Right cardiac atrium (tissue), 5 donors: ENCODE measurements at regions of chr19 and their contacts with region 1.

Region 1: DNA sequence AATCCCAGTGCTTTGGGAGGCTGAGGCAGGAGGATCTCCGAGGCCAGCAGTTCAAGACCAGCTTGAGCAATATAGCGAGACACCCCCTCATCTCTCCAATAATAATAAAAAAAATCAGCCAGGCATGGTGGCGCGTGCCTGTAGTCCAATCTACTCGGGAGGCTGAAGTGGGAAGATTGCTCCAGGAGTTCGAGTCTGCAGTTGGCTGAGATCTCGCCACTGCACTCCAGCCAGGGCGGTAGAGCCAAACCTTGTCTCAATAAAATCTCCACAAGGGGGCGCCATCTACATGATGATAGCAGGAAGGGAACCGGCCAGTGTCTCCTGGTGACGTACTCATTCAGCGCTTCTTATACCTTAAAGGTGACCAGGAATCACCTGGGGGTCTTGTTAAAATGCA is 13.6 kb upstream of the C5AR1 start:
- DNase-seq: peak; percentile 42 to 72 (median 68)
- ATAC-seq: peak; percentile 57 to 82
- H3K4me3 ChIP-seq: no peak overlapping the region
- H3K27ac ChIP-seq: no peak overlapping the region
- H3K4me1 ChIP-seq: no peaks in the 10 kb centered on the region
- H3K27me3 ChIP-seq: no peaks in the 10 kb centered on the region

Region 2: GRCh38 chr19:47379381-47379938 is 83.4 kb after region 1 on chr19:
- intact Hi-C with region 1: no loop called
- DNase-seq: no peak
- ATAC-seq: no peak
- H3K4me3 ChIP-seq: no peak overlapping the region
- H3K27ac ChIP-seq: no peak overlapping the region
- H3K4me1 ChIP-seq: no peaks in the 10 kb centered on the region
- H3K27me3 ChIP-seq: no peaks in the 10 kb centered on the region

Region 3: DNA sequence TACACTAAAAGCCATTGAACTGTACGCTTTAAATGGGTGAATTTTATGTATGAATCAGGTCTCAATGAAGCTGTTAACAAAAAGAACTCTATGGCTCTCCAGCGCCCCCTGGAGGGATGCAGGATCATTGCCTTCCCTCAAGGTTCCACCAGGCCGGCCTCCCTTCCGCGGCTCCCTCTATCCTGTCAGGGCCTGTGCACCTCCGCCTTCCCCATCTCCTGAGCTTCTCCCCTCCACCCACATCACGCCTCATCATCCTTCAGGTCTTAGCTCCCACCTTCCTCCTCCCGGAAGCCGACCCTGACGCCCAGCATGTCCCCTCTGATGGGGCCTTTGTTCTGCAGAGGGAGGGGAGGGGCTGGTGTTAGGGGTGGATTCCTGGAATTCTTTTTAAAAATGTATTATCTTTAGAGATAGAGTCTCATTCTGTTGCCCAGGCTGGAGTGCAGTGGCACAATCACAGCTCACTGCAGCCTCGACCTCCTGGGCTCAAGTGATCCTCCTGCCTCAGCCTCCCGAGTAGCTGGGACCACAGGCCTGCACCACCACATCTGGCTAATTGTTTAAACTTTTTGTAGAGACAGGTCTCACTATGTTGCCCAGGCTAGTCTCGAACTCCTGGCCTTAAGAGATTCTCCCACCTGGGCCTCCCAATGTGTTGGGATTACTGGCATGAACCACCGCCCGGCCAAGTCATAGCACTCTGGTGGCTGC is 95.6 kb after region 1 on chr19:
- intact Hi-C with region 1: loop called in 3 of 4 experiments (anchors 2 to 5 kb)
- DNase-seq: peak; percentile 69 to 87 (median 82)
- ATAC-seq: peak; percentile 43 to 77
- H3K4me3 ChIP-seq: no peak overlapping the region
- H3K27ac ChIP-seq: no peak overlapping the region
- H3K4me1 ChIP-seq: no peaks in the 10 kb centered on the region
- H3K27me3 ChIP-seq: no peaks in the 10 kb centered on the region

Region 4: GRCh38 chr19:47428177-47428894 is 132.3 kb after region 1 on chr19:
- intact Hi-C with region 1: loop called in 3 of 4 experiments (anchors 10 kb)
- DNase-seq: peak; percentile 91 to 94 (median 91)
- ATAC-seq: peak; percentile 91 to 94
- H3K4me3 ChIP-seq: no peak overlapping the region
- H3K27ac ChIP-seq: no peak overlapping the region
- H3K4me1 ChIP-seq: no peaks in the 10 kb centered on the region
- H3K27me3 ChIP-seq: no peaks in the 10 kb centered on the region

Region 5: DNA sequence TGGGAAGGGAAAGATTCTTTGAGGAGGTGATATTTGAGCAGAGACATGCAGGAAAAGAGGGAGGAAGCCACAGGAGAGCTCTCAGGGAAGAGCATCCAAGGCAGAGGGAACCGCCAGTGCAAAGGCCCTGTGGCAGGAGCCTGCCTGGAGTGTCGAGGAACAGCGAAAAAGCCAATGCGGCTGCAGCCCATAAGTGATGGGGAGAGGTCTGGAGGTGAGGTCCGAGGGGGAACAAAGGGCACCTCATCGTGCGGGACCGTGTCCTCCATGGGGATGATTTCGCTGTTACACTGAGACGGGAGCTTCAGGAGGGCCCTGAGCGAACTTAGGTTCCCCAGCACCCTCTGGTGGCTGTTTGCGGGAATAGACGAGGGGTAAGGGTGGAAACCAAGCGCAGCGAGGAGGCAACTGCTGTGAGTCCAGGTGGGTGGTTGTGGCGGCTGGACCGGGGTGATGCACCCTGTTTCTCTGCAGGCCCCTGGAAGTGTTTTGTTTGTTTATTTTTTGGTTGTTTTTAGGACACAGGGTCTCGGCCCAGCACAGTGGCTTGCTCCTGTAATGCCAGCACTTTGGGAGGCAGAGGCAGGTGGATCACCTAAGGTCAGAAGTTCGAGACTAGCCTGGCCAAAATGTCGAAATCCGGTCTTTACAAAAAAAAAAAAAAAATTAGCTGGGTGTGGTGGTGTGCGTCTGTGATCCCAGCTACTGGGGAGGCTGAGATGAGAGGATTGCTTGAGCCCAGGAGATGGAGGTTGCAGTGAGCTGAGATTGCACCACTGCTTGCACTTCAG is 411.3 kb after region 1 on chr19:
- intact Hi-C with region 1: loop called in 1 of 4 experiments (anchors 10 kb)
- DNase-seq: peak; percentile 72 to 84 (median 83)
- ATAC-seq: peak; percentile 80 to 82
- H3K4me3 ChIP-seq: no peak overlapping the region
- H3K27ac ChIP-seq: no peak overlapping the region
- H3K4me1 ChIP-seq: no peaks in the 10 kb centered on the region
- H3K27me3 ChIP-seq: no peaks in the 10 kb centered on the region